ENCODE measurements at regions of chr19 and their contacts with region 1.

Region 1: GRCh38 chr19:41501854-41502253 is 58.9 kb downstream of the ERICH4 start:
- DNase-seq: no peak
- ATAC-seq: no peak
- H3K4me3 ChIP-seq: peak overlapping the region in 1 of 12 donors; percentile 17
- H3K27ac ChIP-seq: peak overlapping the region in 11 of 12 donors; percentile 47 to 99 (median 92)
- H3K4me1 ChIP-seq: peaks cover 0 to 24% (median 0%) of the 10 kb centered on the region in 12 donors
- H3K27me3 ChIP-seq: peaks cover 0 to 21% (median 0%) of the 10 kb centered on the region in 9 donors
- CTCF ChIP-seq: no peak
- POLR2A ChIP-seq: no peak

Region 2: DNA sequence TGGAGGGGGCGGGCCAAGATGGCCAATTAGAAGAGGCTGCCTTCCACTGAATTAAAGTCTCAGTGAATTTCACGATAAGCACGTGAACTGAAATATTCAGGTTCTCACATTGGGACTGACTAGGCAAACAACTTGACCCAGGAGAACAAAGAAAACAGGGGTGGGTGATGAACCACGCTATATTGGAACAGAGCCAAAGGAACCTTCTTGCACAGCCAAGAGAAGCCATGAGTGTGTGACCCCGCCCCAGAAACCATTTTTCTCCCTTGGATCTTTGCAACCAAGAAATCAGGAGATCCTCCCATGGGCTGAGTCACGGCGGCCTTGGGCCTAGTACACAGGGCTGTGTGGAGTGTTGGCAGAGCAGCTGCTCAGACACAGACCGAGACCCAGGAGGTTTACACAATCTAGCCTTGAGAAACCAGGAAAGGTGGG is 22.1 kb before region 1 on chr19:
- intact Hi-C with region 1: loop called in 2 of 10 experiments (anchors 1 to 2 kb)
- DNase-seq: peak in 4 of 5 donors; percentile 60 to 80 (median 62)
- ATAC-seq: peak; percentile 83 to 88 (median 86)
- H3K4me3 ChIP-seq: peak overlapping the region in 8 of 12 donors; percentile 17 to 55 (median 32)
- H3K27ac ChIP-seq: peak overlapping the region in 11 of 12 donors; percentile 56 to 89 (median 80)
- H3K4me1 ChIP-seq: peaks cover 0 to 33% (median 11%) of the 10 kb centered on the region in 12 donors
- H3K27me3 ChIP-seq: peaks cover 0 to 22% (median 4%) of the 10 kb centered on the region in 9 donors
- CTCF ChIP-seq: no peak
- POLR2A ChIP-seq: no peak